Activated CD8-positive, alpha-beta T cell treated with anti-CD3 and anti-CD28 coated beads, Interleukin-2, amount 10 ng/mL, durations not matched to agents 7 days and 5 days (primary cell): ENCODE measurements at regions of chr3 and their contacts with region 1.

Region 1: DNA sequence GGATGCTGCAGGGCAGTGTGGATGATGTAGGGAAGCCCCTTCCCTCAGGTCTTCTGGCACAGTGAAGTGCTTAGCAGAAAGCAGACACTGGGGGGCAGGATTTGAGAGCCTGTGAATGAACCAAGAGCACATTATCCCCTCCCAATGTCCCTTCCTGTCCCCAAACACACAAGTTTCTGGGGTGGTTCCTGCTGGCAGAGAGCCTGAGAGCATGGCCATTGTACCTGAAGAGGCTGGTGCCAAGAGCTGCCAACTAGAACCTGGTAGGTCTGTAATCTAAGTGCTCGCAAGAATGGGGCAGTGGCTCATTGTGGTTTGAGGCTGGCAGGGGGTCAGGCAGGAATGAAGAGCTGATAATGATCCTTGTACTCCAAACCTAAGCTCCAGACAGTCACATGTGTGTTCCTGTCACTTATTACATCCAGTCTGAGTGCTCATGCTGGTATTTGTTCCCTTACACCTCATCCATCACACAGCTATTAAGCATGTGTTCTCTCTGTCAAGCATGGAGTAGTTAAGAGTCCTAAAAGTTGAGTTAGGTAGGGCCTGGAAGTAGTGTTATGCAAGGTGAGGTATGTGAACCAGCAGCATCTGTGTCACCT is 6.7 kb upstream of the CCR1 start:
- DNase-seq: peak; percentile 64
- ATAC-seq: peak; percentile 13
- H3K4me3 Mint-ChIP-seq: no peak overlapping the region
- H3K27ac Mint-ChIP-seq: no peak overlapping the region
- H3K4me1 Mint-ChIP-seq: peaks cover 32% of the 10 kb centered on the region
- H3K27me3 Mint-ChIP-seq: no peaks in the 10 kb centered on the region

Region 2: GRCh38 chr3:46089237-46090011 is 125.4 kb before region 1 on chr3:
- CTCF ChIA-PET with region 1: interaction called, 150 read pairs
- POLR2A ChIA-PET with region 1: no interaction called
- DNase-seq: no peak
- ATAC-seq: peak; percentile 37
- H3K4me3 Mint-ChIP-seq: no peak overlapping the region
- H3K27ac Mint-ChIP-seq: peak overlapping the region; percentile 53
- H3K4me1 Mint-ChIP-seq: peaks cover 75% of the 10 kb centered on the region
- H3K27me3 Mint-ChIP-seq: no peaks in the 10 kb centered on the region

Region 3: DNA sequence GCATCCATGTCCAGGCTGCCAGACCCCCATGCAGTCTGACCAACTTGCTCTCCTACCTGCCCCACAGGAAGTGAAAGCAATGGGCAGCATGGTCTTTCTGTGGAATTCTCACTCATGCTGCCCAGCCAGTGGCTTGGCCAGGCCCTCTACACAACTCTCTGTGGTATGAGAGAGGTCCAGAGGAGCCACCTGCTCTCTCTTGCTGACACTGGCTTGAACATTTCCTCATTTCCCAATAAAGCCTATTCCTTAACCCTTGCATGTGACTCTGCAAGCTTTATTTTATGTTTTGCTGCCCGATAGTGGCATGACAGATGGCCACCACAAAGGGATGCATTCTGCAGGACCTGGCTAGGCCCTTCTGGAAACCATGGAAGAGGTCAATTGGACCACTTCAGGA is 60.5 kb before region 1 on chr3:
- CTCF ChIA-PET with region 1: no interaction called
- POLR2A ChIA-PET with region 1: no interaction called
- DNase-seq: no peak
- ATAC-seq: no peak
- H3K4me3 Mint-ChIP-seq: no peak overlapping the region
- H3K27ac Mint-ChIP-seq: peak overlapping the region; percentile 48
- H3K4me1 Mint-ChIP-seq: peaks cover 14% of the 10 kb centered on the region
- H3K27me3 Mint-ChIP-seq: peaks cover 9% of the 10 kb centered on the region

Region 4: GRCh38 chr3:46228259-46229242 is 13.7 kb after region 1 on chr3:
- CTCF ChIA-PET with region 1: interaction called, 16 read pairs
- POLR2A ChIA-PET with region 1: no interaction called
- DNase-seq: no peak
- ATAC-seq: peak; percentile 36
- H3K4me3 Mint-ChIP-seq: no peak overlapping the region
- H3K27ac Mint-ChIP-seq: no peak overlapping the region
- H3K4me1 Mint-ChIP-seq: peaks cover 13% of the 10 kb centered on the region
- H3K27me3 Mint-ChIP-seq: peaks cover 14% of the 10 kb centered on the region

Region 5: DNA sequence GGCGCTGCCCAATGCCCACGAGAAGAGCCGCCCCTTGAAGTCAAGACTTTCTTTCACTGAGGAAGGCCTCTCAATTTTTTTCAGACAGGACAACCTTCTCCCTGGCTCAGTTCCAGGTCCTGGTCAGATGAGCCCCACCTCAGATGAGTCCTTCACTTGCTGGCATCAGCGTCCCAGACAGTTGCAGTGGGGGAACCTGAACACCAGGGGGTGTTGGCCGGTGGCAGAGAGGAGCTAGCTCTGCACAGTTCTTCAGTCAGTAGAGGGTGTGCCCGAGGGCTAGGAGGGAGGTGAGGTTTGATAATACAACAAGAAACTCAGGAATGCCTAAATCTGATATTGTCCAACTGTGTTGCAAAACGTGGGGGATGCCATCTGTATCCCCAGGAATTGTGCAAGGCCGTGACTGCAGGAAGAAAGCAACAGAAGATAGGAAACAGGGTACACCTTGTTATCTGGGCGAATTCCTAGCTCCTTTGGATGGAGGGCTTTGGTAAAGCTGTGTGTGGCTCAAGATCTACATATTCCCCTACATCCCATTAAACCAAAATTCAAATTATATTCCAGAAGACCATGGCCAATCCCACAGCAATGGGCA is 61.7 kb after region 1 on chr3:
- CTCF ChIA-PET with region 1: interaction called, 35 read pairs
- POLR2A ChIA-PET with region 1: interaction called, 5 read pairs
- DNase-seq: peak; percentile 89
- ATAC-seq: peak; percentile 83
- H3K4me3 Mint-ChIP-seq: no peak overlapping the region
- H3K27ac Mint-ChIP-seq: peak overlapping the region; percentile 85
- H3K4me1 Mint-ChIP-seq: peaks cover 64% of the 10 kb centered on the region
- H3K27me3 Mint-ChIP-seq: peaks cover 3% of the 10 kb centered on the region

Region 6: GRCh38 chr3:46359733-46360493 is 145.1 kb after region 1 on chr3:
- CTCF ChIA-PET with region 1: interaction called, 16 read pairs
- POLR2A ChIA-PET with region 1: interaction called, 3 read pairs
- DNase-seq: no peak
- ATAC-seq: peak; percentile 43
- H3K4me3 Mint-ChIP-seq: no peak overlapping the region
- H3K27ac Mint-ChIP-seq: no peak overlapping the region
- H3K4me1 Mint-ChIP-seq: peaks cover 74% of the 10 kb centered on the region
- H3K27me3 Mint-ChIP-seq: peaks cover 2% of the 10 kb centered on the region

Region 7: GRCh38 chr3:46423588-46423987 is 208.7 kb after region 1 on chr3:
- CTCF ChIA-PET with region 1: interaction called, 17 read pairs
- POLR2A ChIA-PET with region 1: no interaction called
- DNase-seq: no peak
- ATAC-seq: no peak
- H3K4me3 Mint-ChIP-seq: no peak overlapping the region
- H3K27ac Mint-ChIP-seq: no peak overlapping the region
- H3K4me1 Mint-ChIP-seq: peaks cover 24% of the 10 kb centered on the region
- H3K27me3 Mint-ChIP-seq: no peaks in the 10 kb centered on the region